ENCODE measurements at regions of chr13 and their contacts with region 1.

Region 1: GRCh38 chr13:52011632-52012511 is at the start of gene ALG11:
- DNase-seq: peak; percentile 100
- H3K4me3 ChIP-seq: peak within 1 kb of the TSS; percentile 51 to 88 (median 74)
- H3K27ac ChIP-seq: peak within 1 kb of the TSS; percentile 72
- H3K4me1 ChIP-seq: peaks cover 14% of the 10 kb centered on the region
- H3K27me3 ChIP-seq: peaks cover 13 to 14% of the 10 kb centered on the region in 2 experiments
- CTCF ChIP-seq: no peak
- POLR2A ChIP-seq: peak; percentile 89
- total RNA-seq, gene ALG11: 31.0 and 34.7 TPM in 2 replicates

Region 2: GRCh38 chr13:51583875-51584730 is 427.8 kb before region 1 on chr13 and contains the start of gene WDFY2:
- CTCF ChIA-PET with region 1: no interaction called
- POLR2A ChIA-PET with region 1: no interaction called
- dilution Hi-C with region 1: no loop called
- intact Hi-C with region 1: loop called (anchors 5 kb)
- DNase-seq: peak; percentile 100
- H3K4me3 ChIP-seq: peak within 1 kb of the TSS; percentile 80 to 90 (median 85)
- H3K27ac ChIP-seq: peak within 1 kb of the TSS; percentile 52
- H3K4me1 ChIP-seq: peaks cover 14% of the 10 kb centered on the region
- H3K27me3 ChIP-seq: no peaks in the 10 kb centered on the region
- CTCF ChIP-seq: peak in 1 of 2 donors; percentile 17
- POLR2A ChIP-seq: no peak
- total RNA-seq, gene WDFY2: 5.5 TPM in 2 replicates

Region 3: GRCh38 chr13:51746802-51747201 is 265.1 kb before region 1 on chr13:
- CTCF ChIA-PET with region 1: no interaction called
- POLR2A ChIA-PET with region 1: no interaction called
- dilution Hi-C with region 1: no loop called
- intact Hi-C with region 1: no loop called
- DNase-seq: no peak
- H3K4me3 ChIP-seq: no peak overlapping the region
- H3K27ac ChIP-seq: no peak overlapping the region
- H3K4me1 ChIP-seq: no peaks in the 10 kb centered on the region
- H3K27me3 ChIP-seq: no peaks in the 10 kb centered on the region
- CTCF ChIP-seq: no peak
- POLR2A ChIP-seq: no peak

Region 4: DNA sequence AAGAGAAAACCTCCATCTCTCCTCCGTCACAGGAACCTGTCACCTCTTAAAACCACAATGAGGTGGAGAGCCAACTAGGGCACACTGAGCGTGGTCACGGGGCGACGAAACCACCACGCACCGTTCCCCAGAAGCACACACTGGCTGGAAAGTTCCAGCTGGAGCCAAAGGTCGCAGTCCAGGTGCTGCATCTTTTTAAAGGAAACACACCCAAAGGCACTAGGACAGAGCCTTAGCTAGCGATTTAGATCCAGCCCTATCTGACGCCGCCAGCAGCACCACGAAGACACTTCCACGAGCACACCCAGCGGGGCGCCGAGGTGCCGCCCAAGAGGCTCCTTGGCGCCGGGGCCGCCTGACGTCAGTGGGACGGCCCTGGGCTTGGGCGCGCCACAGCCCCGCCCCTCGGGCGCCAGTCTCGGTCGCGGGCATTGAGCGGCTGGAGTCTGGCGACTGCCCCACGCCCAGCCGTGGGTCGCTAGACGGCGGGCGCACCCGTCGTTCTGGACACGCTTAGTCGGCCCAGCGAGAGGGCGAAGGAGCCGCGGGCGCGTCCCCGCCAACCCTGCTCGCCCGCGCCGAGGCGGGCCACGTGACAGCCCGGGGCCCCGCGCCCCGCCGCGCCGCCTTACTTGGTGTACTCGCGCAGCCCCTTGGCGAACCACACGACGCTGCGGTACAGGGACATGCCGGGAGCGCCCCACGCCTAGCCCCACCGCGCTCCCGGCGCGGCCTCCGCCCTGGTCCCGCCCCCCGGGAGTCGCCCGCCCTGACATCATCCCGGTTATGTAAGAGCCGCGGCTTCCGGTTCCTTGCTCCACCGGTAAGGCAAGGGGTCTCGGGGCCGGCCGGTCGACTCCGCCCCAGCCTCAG is 208.2 kb before region 1 on chr13 and contains the start of gene DHRS12:
- CTCF ChIA-PET with region 1: no interaction called
- POLR2A ChIA-PET with region 1: no interaction called
- dilution Hi-C with region 1: no loop called
- intact Hi-C with region 1: loop called (anchors 5 kb)
- DNase-seq: peak; percentile 75
- H3K4me3 ChIP-seq: peak within 1 kb of the TSS; percentile 62 to 72 (median 71)
- H3K27ac ChIP-seq: peak within 1 kb of the TSS; percentile 92
- H3K4me1 ChIP-seq: peaks cover 35% of the 10 kb centered on the region
- H3K27me3 ChIP-seq: no peaks in the 10 kb centered on the region
- CTCF ChIP-seq: no peak
- POLR2A ChIP-seq: peak; percentile 77
- total RNA-seq, gene DHRS12: 6.4 and 8.9 TPM in 2 replicates

Region 5: GRCh38 chr13:51895906-51896888 is 115.7 kb before region 1 on chr13:
- CTCF ChIA-PET with region 1: interaction called, 4 read pairs
- POLR2A ChIA-PET with region 1: no interaction called
- dilution Hi-C with region 1: no loop called
- intact Hi-C with region 1: loop called (anchors 2 kb)
- DNase-seq: peak; percentile 63
- H3K4me3 ChIP-seq: no peak overlapping the region
- H3K27ac ChIP-seq: no peak overlapping the region
- H3K4me1 ChIP-seq: no peaks in the 10 kb centered on the region
- H3K27me3 ChIP-seq: peaks cover 13 to 23% of the 10 kb centered on the region in 2 experiments
- CTCF ChIP-seq: peak; percentile 59 to 77
- POLR2A ChIP-seq: no peak

Region 6: GRCh38 chr13:51981360-51981759 is 30.5 kb before region 1 on chr13:
- CTCF ChIA-PET with region 1: no interaction called
- POLR2A ChIA-PET with region 1: no interaction called
- dilution Hi-C with region 1: no loop called
- intact Hi-C with region 1: no loop called
- DNase-seq: no peak
- H3K4me3 ChIP-seq: no peak overlapping the region
- H3K27ac ChIP-seq: no peak overlapping the region
- H3K4me1 ChIP-seq: no peaks in the 10 kb centered on the region
- H3K27me3 ChIP-seq: no peaks in the 10 kb centered on the region
- CTCF ChIP-seq: no peak
- POLR2A ChIP-seq: no peak

Region 7: DNA sequence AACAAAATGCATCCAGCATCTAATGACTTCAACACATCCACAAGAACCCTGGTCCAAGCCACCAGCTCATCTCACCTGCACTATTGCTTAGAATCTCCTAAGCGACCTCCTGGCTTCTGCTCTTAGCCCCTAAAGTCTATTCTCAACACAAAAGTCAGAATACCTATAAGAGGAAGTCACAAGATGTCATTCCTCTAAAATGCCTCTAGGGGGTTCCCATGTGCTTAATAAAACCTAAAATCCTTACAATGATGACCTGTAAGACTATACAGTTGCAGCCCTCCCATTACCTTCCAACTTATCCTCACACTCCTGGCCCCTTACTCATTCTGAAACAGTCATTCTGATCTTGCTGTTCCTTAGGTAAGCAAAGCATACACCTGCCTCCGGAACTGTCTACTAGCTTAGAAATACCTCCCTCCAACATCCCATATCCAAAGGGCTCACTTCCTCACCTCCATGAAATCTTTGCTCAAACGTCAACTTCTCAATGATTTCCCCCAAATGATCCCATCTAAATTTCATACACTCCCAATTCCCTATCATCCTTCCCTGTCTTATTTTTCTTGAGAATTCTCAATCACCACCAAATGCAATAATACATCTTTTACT is 10.6 kb before region 1 on chr13:
- CTCF ChIA-PET with region 1: interaction called, 7 read pairs
- POLR2A ChIA-PET with region 1: no interaction called
- dilution Hi-C with region 1: no loop called
- intact Hi-C with region 1: loop called (anchors 1 kb)
- DNase-seq: peak; percentile 38
- H3K4me3 ChIP-seq: no peak overlapping the region
- H3K27ac ChIP-seq: no peak overlapping the region
- H3K4me1 ChIP-seq: no peaks in the 10 kb centered on the region
- H3K27me3 ChIP-seq: peaks cover 10 to 11% of the 10 kb centered on the region in 2 experiments
- CTCF ChIP-seq: peak; percentile 42 to 61
- POLR2A ChIP-seq: no peak

Region 8: DNA sequence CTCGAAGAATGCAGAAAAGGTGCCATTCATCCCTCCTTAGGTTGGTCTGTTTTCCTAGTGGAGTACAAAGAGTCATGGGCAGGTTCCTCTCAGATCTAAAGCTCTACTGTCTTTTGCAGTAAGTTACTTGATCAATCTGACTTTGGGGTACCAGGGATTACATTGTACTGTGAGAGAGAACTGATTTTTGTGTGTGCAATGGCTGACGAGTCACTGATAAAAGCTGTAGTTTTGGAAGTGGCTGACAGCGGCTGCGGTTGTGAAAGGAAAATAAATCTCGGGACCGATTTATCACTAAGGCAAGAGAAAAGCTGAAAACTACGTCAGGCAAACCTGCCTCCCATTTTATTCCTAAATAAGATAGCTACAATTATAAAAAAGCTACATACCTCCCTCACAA is 39.5 kb after region 1 on chr13:
- CTCF ChIA-PET with region 1: no interaction called
- POLR2A ChIA-PET with region 1: no interaction called
- dilution Hi-C with region 1: no loop called
- intact Hi-C with region 1: no loop called
- DNase-seq: no peak
- H3K4me3 ChIP-seq: no peak overlapping the region
- H3K27ac ChIP-seq: no peak overlapping the region
- H3K4me1 ChIP-seq: no peaks in the 10 kb centered on the region
- H3K27me3 ChIP-seq: no peaks in the 10 kb centered on the region
- CTCF ChIP-seq: no peak
- POLR2A ChIP-seq: no peak

Region 9: GRCh38 chr13:52061587-52061986 is 49.7 kb after region 1 on chr13:
- CTCF ChIA-PET with region 1: interaction called, 3 read pairs
- POLR2A ChIA-PET with region 1: no interaction called
- dilution Hi-C with region 1: no loop called
- intact Hi-C with region 1: loop called (anchors 1 kb)
- DNase-seq: peak; percentile 68
- H3K4me3 ChIP-seq: no peak overlapping the region
- H3K27ac ChIP-seq: peak overlapping the region; percentile 36
- H3K4me1 ChIP-seq: peaks cover 13% of the 10 kb centered on the region
- H3K27me3 ChIP-seq: no peaks in the 10 kb centered on the region
- CTCF ChIP-seq: no peak
- POLR2A ChIP-seq: no peak

Region 10: DNA sequence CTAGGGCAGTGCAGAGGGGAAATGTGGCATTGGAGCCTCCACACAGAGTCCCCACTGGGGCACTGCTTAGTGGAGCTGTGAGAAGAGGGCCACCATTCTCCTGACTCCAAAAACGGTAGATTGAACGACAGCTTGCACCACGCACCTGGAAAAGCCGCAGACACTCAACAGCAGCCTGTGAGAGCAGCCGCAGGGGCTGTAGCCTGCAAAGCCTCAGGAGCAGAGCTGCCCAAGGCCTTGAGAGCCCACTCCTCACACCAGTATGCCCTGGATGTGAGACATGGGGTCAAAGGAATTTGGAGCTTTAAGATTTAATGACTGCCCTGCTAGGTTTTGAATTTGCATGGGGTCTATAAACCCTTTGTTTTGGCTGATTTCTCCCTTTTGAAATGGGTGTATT is 85.3 kb after region 1 on chr13:
- CTCF ChIA-PET with region 1: no interaction called
- POLR2A ChIA-PET with region 1: no interaction called
- dilution Hi-C with region 1: no loop called
- intact Hi-C with region 1: no loop called
- DNase-seq: no peak
- H3K4me3 ChIP-seq: no peak overlapping the region
- H3K27ac ChIP-seq: no peak overlapping the region
- H3K4me1 ChIP-seq: no peaks in the 10 kb centered on the region
- H3K27me3 ChIP-seq: peaks cover 0 to 3% of the 10 kb centered on the region in 2 experiments
- CTCF ChIP-seq: no peak
- POLR2A ChIP-seq: no peak

Region 11: DNA sequence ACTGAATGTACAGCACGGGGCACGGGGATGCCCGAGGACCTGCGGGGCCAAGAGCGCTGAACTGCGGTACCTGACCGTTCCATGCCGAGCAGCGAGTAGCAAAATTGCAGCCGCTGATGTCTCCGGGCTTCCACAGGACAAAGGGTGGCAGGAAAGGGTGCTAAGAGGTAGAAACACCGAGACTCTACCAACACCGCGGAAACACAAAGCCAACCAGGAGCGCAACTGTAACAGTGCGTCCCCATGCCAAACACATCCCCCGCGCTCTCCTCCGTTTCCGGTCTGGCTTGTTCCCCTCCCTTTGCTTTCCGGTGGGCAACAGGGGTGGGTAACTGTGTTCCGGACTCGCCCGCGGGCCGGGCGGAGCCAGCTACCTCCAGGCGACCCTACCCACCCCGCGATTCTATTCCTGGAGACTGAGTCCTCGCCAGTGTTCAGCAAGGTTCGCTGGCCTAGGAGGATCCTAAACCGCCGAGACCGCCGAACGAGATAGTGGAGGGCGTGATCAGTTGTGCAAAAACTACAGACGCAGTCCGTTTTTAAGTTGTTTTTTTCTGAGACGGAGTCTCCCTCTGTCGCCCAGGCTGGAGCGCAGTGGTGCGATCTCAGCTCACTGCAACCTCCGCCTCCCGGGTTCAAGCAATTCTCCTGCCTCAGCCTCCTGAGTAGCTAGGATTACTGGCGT is 182.5 kb after region 1 on chr13:
- CTCF ChIA-PET with region 1: no interaction called
- POLR2A ChIA-PET with region 1: no interaction called
- dilution Hi-C with region 1: no loop called
- intact Hi-C with region 1: loop called (anchors 1 kb)
- DNase-seq: peak; percentile 68
- H3K4me3 ChIP-seq: peak overlapping the region; percentile 37 to 88 (median 73)
- H3K27ac ChIP-seq: peak overlapping the region; percentile 43
- H3K4me1 ChIP-seq: peaks cover 9% of the 10 kb centered on the region
- H3K27me3 ChIP-seq: no peaks in the 10 kb centered on the region
- CTCF ChIP-seq: no peak
- POLR2A ChIP-seq: peak; percentile 91

Measured in endothelial cell of umbilical vein (primary cell).